ENCODE measurements at regions of chr7 and their contacts with region 1.

Region 1: GRCh38 chr7:91995391-91996105 is 54.9 kb downstream of the AKAP9 start:
- DNase-seq: no peak
- ATAC-seq: no peak
- H3K4me3 ChIP-seq: no peak overlapping the region
- H3K4me3 Mint-ChIP-seq: no peak overlapping the region
- H3K27ac ChIP-seq: no peak overlapping the region
- H3K27ac Mint-ChIP-seq: no peak overlapping the region
- H3K4me1 ChIP-seq: no peaks in the 10 kb centered on the region
- H3K4me1 Mint-ChIP-seq: peaks cover 0 to 6% (median 2%) of the 10 kb centered on the region in 3 donors
- H3K27me3 ChIP-seq: no peaks in the 10 kb centered on the region
- H3K27me3 Mint-ChIP-seq: no peaks in the 10 kb centered on the region

Region 2: DNA sequence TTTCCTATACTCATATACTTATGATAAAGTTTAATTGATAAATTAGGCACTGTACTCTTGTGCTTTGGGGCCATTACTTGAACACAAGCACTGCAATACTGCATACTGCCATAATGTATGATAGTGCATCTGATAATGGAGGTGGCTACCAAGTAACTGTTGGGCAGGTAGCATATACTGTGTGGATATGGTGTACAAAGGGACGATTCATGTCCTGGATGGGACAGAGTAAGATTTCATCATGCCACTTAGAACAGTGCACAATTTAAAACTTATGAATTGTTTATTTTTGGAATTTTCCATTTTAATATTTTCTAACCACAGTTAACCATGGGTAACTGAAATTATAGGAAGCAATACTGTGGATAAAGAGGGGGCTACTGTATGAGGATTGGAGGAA is 16.0 kb before region 1 on chr7:
- CTCF ChIA-PET with region 1: no interaction called
- POLR2A ChIA-PET with region 1: no interaction called
- DNase-seq: no peak
- ATAC-seq: no peak
- H3K4me3 ChIP-seq: no peak overlapping the region
- H3K4me3 Mint-ChIP-seq: no peak overlapping the region
- H3K27ac ChIP-seq: no peak overlapping the region
- H3K27ac Mint-ChIP-seq: no peak overlapping the region
- H3K4me1 ChIP-seq: no peaks in the 10 kb centered on the region
- H3K4me1 Mint-ChIP-seq: peaks cover 15 to 16% (median 15%) of the 10 kb centered on the region in 3 donors
- H3K27me3 ChIP-seq: no peaks in the 10 kb centered on the region
- H3K27me3 Mint-ChIP-seq: no peaks in the 10 kb centered on the region

Region 3: DNA sequence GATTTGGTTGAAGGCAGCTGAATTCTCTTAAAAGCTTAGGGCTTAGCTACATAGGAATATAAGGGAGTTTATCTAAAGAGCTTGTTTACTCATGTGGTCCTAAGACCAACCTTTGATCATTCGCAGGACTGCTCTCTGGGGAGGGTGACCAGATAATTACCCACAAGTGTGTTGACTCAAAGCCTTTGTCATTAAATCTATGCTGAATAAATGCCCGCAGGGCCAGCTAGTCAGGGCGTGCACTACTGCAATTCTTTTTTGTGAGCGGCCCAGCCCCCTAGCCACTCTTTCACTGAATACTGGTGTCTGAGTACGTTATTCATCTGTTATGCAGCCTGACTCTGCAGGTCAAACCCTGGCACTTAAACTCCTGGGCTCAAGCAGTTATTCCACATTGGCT is 14.7 kb after region 1 on chr7:
- CTCF ChIA-PET with region 1: no interaction called
- POLR2A ChIA-PET with region 1: no interaction called
- DNase-seq: no peak
- ATAC-seq: no peak
- H3K4me3 ChIP-seq: no peak overlapping the region
- H3K4me3 Mint-ChIP-seq: no peak overlapping the region
- H3K27ac ChIP-seq: no peak overlapping the region
- H3K27ac Mint-ChIP-seq: no peak overlapping the region
- H3K4me1 ChIP-seq: no peaks in the 10 kb centered on the region
- H3K4me1 Mint-ChIP-seq: no peaks in the 10 kb centered on the region
- H3K27me3 ChIP-seq: no peaks in the 10 kb centered on the region
- H3K27me3 Mint-ChIP-seq: no peaks in the 10 kb centered on the region

Region 4: DNA sequence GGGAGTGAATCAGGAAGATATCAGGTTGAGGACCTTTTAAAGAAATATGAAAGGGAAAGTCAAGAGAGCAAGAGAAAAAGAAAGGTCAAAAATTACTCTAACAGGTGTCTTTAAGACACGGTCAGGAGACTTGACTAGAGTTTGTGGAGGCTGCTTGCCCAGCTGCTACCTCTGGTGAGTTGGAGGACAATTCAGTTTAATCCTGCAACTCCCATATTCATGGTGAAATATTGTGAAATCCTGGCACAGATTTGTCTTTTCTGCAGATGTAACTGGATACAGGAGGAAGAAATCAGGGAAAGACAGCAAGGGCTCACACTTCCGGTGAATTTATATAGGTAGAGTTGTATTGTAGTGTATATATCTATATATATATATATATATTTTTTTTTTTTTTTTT is 38.6 kb after region 1 on chr7:
- CTCF ChIA-PET with region 1: no interaction called
- POLR2A ChIA-PET with region 1: interaction called in 1 of 2 experiments, 11 read pairs
- DNase-seq: no peak
- ATAC-seq: no peak
- H3K4me3 ChIP-seq: no peak overlapping the region
- H3K4me3 Mint-ChIP-seq: no peak overlapping the region
- H3K27ac ChIP-seq: no peak overlapping the region
- H3K27ac Mint-ChIP-seq: no peak overlapping the region
- H3K4me1 ChIP-seq: no peaks in the 10 kb centered on the region
- H3K4me1 Mint-ChIP-seq: peaks cover 0 to 5% (median 0%) of the 10 kb centered on the region in 3 donors
- H3K27me3 ChIP-seq: no peaks in the 10 kb centered on the region
- H3K27me3 Mint-ChIP-seq: no peaks in the 10 kb centered on the region

Measured in T-cell (primary cell).